ENCODE measurements at regions of chr3 and their contacts with region 1.

Region 1: DNA sequence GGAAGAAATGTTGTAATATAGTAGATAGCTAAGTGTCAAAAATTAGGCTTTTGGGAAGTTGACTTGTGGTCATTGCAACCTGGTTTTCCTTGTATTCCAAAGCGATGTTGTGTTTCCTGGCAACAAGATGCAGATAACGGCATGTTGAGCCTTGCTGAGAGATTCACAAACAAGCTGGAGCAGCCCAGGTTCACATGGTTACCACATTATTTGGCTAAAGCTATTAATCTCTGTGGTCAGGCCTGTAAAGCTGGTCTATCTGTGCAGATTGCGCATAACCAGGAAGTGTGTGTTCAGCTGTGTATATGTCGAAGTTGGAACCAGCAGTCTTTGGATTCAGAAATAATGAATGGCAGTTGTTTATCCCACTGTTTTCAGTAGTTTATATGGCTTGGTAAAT is 6.6 kb downstream of the TIPARP start:
- DNase-seq: no peak
- ATAC-seq: peak in 1 of 2 donors; percentile 55
- H3K4me3 ChIP-seq: peak overlapping the region in 1 of 4 donors; percentile 24
- H3K27ac ChIP-seq: peak overlapping the region in 1 of 4 donors; percentile 7
- H3K4me1 ChIP-seq: peaks cover 81 to 88% of the 10 kb centered on the region in 2 donors
- H3K27me3 ChIP-seq: no peaks in the 10 kb centered on the region
- CTCF ChIP-seq: no peak
- POLR2A ChIP-seq: no peak

Region 2: GRCh38 chr3:156705761-156706631 is 25.0 kb after region 1 on chr3:
- in situ Hi-C with region 1: no loop called
- intact Hi-C with region 1: no loop called
- DNase-seq: no peak
- ATAC-seq: no peak
- H3K4me3 ChIP-seq: no peak overlapping the region
- H3K27ac ChIP-seq: no peak overlapping the region
- H3K4me1 ChIP-seq: peaks cover 0 to 6% of the 10 kb centered on the region in 2 donors
- H3K27me3 ChIP-seq: no peaks in the 10 kb centered on the region
- CTCF ChIP-seq: no peak
- POLR2A ChIP-seq: no peak

Region 3: DNA sequence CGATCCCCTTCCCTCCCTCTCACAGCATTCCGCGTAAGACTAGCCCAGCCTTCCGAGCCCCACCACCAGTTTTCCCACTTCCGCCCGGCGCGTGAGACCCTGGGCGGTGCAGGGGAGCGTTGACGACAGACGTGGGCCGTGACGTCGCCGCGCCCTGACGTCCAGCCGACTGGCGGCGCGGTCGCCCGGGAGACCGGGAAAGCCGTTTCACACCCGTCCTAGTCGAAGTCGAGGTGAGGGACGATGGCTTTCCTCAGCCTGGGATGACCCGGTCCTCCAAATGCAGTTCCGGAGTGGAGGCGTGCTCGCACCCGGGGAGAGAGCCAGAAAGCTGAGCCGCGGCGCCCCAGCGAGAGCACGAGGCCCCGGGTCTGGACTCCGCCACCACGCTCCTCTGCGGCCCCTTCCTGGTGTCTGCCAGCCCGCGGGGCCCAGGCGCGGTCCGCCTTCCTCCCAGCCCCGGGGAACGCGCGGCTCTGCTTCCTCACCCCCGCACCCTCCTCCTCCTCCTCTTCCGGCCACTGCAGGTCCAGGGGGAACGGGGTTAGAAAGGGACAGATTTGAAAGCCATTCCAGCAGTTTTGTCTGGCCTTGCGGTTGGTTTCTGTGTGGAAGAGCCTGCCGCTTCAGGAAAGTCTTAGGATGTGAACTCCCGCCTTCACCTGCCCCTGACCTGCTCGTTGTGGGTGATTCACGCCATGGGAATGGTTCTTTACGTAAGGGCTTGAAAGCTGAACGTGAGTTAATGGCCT is 145.3 kb after region 1 on chr3 and contains the start of gene LEKR1:
- in situ Hi-C with region 1: loop called in 1 of 4 experiments (anchors 10 kb)
- intact Hi-C with region 1: no loop called
- DNase-seq: peak; percentile 68 to 69
- ATAC-seq: peak; percentile 92 to 94
- H3K4me3 ChIP-seq: peak within 1 kb of the TSS; percentile 66 to 84 (median 80)
- H3K27ac ChIP-seq: peak within 1 kb of the TSS; percentile 79 to 90 (median 82)
- H3K4me1 ChIP-seq: peaks cover 7 to 8% of the 10 kb centered on the region in 2 donors
- H3K27me3 ChIP-seq: no peaks in the 10 kb centered on the region
- CTCF ChIP-seq: no peak
- POLR2A ChIP-seq: peak; percentile 72 to 76
- total RNA-seq, gene LEKR1: 0.20 to 0.56 TPM in 2 of 4 donors, not detected in the others

Measured in gastrocnemius medialis (tissue), 4 donors.